Mammary epithelial cell (primary cell): ENCODE measurements at regions of chr2 and their contacts with region 1.

Region 1: DNA sequence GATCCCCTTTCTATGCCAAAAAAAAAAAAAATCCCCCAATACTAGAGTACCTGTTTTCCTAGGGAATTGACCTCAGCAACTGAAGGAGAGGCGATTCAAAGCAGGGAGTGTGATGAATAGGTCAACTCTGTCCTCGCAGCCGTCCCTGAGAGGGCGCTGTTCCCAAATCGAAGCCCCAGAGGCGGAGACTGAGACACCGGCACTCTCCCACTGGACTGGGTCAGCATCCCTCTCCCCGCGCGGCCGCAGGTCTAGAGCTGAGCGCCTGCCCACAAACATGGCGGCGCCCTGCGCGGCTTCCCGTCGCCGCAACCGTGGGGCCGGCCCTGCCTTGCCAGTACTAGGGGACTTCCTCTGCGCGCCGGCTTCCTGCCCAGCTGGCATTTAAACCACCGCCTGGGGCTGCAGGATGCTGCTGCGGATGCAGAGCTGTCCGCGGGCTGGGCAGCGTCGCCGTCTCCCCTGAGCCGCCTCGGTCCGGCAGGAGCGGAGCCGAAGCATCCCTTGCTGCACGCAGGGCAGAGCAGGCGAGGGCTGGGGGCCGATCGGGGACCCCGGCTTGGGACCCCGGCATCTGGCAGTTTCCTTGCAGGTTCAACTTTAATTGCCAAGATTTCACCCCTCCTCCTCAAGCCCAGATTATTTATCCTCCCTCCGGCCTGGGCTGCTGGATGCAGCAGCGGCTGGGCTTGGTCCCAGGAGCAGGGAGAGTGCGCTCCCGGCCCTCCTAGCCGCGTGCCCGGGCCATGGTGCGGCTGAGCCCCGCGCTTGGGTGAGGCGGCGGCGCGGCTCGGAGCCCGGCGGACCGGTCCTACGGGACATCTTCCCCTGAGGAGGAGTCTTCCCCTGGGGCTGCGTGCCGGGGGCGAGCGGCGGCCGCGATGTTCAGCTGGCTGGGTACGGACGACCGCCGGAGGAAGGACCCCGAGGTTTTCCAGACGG is at the start of gene EHD3:
- DNase-seq: peak; percentile 85
- H3K4me3 ChIP-seq: peak within 1 kb of the TSS; percentile 48 to 69 (median 49)
- H3K27ac ChIP-seq: no peak within 1 kb of the TSS
- H3K4me1 ChIP-seq: peaks cover 27% of the 10 kb centered on the region
- H3K27me3 ChIP-seq: no peaks in the 10 kb centered on the region
- CTCF ChIP-seq: peak; percentile 64 to 86
- total RNA-seq, gene EHD3: 39.4 to 53.3 TPM

Region 2: GRCh38 chr2:30447149-30448045 is 786.6 kb before region 1 on chr2 and contains the start of gene LCLAT1:
- CTCF ChIA-PET with region 1: no interaction called
- dilution Hi-C with region 1: no loop called
- in situ Hi-C with region 1: no loop called
- intact Hi-C with region 1: no loop called
- DNase-seq: peak; percentile 67
- H3K4me3 ChIP-seq: peak within 1 kb of the TSS; percentile 74 to 96 (median 79)
- H3K27ac ChIP-seq: peak within 1 kb of the TSS; percentile 77
- H3K4me1 ChIP-seq: peaks cover 18% of the 10 kb centered on the region
- H3K27me3 ChIP-seq: no peaks in the 10 kb centered on the region
- CTCF ChIP-seq: no peak
- total RNA-seq, gene LCLAT1: 26.4 to 27.8 TPM

Region 3: DNA sequence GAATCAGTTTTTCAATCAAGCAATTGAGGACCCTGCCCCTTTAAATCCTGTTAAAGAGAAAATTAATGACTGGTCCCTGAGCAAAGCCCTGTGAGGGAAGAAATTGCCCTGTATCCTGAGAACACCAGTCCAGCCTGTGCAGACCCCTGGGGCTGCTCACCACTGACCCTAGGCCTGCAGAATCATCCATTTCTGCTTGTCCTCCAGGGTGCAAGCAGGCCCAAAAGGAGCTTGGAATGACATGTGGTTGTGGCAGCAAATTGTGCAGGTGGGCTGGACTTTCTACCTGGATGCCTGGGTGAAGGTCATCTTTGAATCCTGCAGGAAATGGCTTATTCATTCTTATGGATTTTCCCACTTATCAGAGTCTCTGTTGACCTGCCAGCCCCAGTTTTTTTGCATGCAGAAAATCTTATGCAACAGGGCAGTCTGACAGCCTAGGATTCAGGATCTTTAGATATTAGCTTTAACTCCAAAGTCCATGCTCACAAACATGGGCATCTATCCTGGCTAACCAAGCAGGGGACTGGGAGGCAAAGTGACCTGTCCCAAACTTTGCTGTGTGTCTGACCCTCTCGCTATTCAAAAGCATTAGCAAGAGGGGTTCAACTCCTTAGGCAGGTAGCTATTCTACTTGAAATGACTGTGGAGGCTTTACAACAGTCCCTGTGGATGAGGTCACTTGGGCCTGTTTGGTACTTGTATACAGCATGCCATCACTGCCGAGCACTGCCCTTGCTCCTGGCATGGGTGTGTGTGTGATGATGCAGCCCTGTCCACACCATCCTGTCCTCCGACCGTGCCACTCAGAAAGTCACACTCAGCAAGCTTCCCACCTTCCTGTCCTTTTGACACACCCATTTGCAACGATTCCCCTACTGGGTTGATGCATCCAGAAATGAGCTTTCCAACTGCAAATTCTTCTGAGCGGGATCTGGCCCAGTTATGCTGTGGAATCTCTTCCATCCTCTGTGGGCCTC is 512.1 kb before region 1 on chr2:
- CTCF ChIA-PET with region 1: no interaction called
- dilution Hi-C with region 1: no loop called
- in situ Hi-C with region 1: no loop called
- intact Hi-C with region 1: no loop called
- DNase-seq: no peak
- H3K4me3 ChIP-seq: no peak overlapping the region
- H3K27ac ChIP-seq: no peak overlapping the region
- H3K4me1 ChIP-seq: no peaks in the 10 kb centered on the region
- H3K27me3 ChIP-seq: peaks cover 5% of the 10 kb centered on the region
- CTCF ChIP-seq: no peak

Region 4: DNA sequence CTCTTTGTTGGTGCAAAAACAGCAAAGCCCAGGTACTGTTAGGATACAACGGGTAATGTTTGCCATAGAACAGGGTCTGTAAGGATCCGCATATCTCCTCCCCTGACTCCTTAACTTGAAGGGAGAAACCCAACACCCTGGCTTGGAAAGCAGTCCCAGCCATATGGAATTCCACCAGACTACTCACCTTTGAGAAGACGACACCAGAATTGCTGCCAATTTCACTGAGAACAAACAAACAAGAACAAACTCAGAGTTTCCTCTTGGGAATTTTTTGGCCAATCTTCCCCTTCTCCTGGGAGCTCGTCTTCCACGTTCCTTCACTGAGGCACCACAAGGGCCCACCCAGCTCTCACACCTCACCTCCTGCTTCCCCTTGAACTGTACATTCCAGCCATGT is 45.9 kb before region 1 on chr2:
- CTCF ChIA-PET with region 1: no interaction called
- dilution Hi-C with region 1: no loop called
- in situ Hi-C with region 1: no loop called
- intact Hi-C with region 1: no loop called
- DNase-seq: no peak
- H3K4me3 ChIP-seq: no peak overlapping the region
- H3K27ac ChIP-seq: no peak overlapping the region
- H3K4me1 ChIP-seq: no peaks in the 10 kb centered on the region
- H3K27me3 ChIP-seq: peaks cover 2% of the 10 kb centered on the region
- CTCF ChIP-seq: no peak

Region 5: GRCh38 chr2:31324000-31324633 is 90.1 kb after region 1 on chr2:
- CTCF ChIA-PET with region 1: no interaction called
- dilution Hi-C with region 1: no loop called
- in situ Hi-C with region 1: no loop called
- intact Hi-C with region 1: loop called (anchors 2 kb)
- DNase-seq: peak; percentile 44
- H3K4me3 ChIP-seq: peak overlapping the region; percentile 30 to 60 (median 48)
- H3K27ac ChIP-seq: peak overlapping the region; percentile 58
- H3K4me1 ChIP-seq: peaks cover 11% of the 10 kb centered on the region
- H3K27me3 ChIP-seq: no peaks in the 10 kb centered on the region
- CTCF ChIP-seq: no peak

Region 6: DNA sequence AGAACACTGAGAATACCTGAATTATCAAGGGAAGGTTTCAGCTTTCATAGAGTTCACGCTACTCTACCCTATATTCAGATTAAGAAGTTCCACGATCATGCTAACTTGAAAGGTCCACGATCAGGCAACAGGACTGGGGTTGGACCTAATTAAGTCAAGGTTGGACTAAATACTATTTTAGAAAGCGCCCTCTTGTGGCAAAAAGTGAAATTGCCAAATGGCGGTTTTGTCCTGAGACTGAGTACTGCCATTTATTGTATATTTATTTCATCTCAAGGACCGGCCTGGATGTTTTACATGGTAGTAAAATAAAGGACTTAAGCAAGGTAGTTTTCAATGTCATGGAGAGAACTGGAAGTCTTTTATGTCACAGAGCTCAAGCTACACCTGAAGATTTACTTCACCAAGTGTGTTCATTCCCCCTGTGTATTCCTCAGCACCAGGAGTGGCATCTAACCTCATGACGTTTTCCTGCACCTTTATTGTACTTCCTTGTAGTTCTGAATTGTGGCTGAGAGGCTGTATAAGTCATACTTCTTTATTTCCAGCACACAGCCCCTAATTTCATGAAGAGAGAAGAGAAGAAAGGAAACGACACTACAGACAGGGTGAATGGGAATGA is 290.0 kb after region 1 on chr2:
- CTCF ChIA-PET with region 1: no interaction called
- dilution Hi-C with region 1: no loop called
- in situ Hi-C with region 1: no loop called
- intact Hi-C with region 1: loop called (anchors 5 kb)
- DNase-seq: peak; percentile 46
- H3K4me3 ChIP-seq: no peak overlapping the region
- H3K27ac ChIP-seq: no peak overlapping the region
- H3K4me1 ChIP-seq: no peaks in the 10 kb centered on the region
- H3K27me3 ChIP-seq: no peaks in the 10 kb centered on the region
- CTCF ChIP-seq: peak; percentile 76 to 77